ENCODE measurements at regions of chr1 and their contacts with region 1.

Region 1: DNA sequence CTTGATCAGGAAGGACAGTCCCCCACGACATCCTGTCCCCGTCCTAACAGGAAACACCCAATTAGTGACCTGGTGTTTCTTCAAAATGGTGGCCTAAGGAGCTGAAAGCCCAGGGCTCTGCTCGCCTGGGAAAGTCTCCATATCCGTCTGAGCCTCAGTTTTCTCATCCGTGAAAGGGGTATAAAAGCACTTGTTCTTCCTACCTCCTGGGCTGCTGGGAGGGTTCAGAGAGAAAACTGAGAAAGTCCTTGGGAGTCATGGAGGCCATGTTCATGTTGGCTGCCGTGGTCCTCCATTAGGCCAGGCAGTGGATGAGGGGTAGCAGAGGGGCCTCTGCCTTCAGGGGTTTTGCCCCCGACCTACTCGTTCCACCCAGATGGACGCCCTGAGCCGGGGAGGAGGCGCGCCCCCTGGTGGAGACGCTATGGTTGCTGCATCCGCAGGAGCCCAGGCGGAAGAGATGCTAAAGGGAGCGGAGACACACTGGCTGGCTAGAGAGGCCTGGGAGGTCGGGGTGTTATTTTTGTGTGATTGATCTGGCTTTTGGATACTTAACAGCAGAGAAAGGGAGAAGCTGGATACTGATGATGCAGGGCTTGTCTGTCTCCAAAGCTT is 113.5 kb downstream of the PRDM2 start:
- DNase-seq: no peak
- H3K4me3 ChIP-seq: no peak overlapping the region
- H3K27ac ChIP-seq: no peak overlapping the region
- H3K4me1 ChIP-seq: no peaks in the 10 kb centered on the region
- H3K27me3 ChIP-seq: no peaks in the 10 kb centered on the region
- CTCF ChIP-seq: peak in 2 of 4 experiments; percentile 40 to 63
- EP300 ChIP-seq: no peak
- POLR2A ChIP-seq: no peak

Region 2: DNA sequence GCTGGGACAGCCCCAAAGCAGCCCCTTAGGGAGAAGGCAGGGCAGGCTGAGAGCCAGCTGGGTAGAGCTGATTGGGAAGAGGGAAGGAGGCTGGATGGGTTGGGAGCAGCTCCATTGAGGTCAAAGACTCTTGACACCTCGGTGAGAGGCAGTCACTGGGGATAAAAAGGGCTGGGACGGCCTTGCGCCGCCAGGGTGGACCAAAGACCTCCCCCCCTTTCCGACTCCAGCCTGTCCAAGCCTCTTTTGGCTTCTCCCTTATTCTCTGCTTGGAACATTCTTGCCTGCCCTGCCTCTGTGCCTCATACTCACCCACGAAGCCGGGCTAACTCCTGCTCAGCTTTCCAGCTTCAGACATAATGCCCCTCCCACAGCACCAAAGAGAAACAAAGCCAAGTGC is 350.8 kb before region 1 on chr1:
- intact Hi-C with region 1: no loop called
- DNase-seq: no peak
- H3K4me3 ChIP-seq: no peak overlapping the region
- H3K27ac ChIP-seq: no peak overlapping the region
- H3K4me1 ChIP-seq: no peaks in the 10 kb centered on the region
- H3K27me3 ChIP-seq: peaks cover 0 to 7% (median 0%) of the 10 kb centered on the region in 3 donors
- CTCF ChIP-seq: no peak
- EP300 ChIP-seq: no peak
- POLR2A ChIP-seq: no peak

Region 3: GRCh38 chr1:13667691-13668090 is 145.8 kb before region 1 on chr1:
- intact Hi-C with region 1: loop called (anchors 5 kb)
- DNase-seq: no peak
- H3K4me3 ChIP-seq: no peak overlapping the region
- H3K27ac ChIP-seq: no peak overlapping the region
- H3K4me1 ChIP-seq: peaks cover 0 to 6% (median 4%) of the 10 kb centered on the region in 4 donors
- H3K27me3 ChIP-seq: no peaks in the 10 kb centered on the region
- CTCF ChIP-seq: no peak
- EP300 ChIP-seq: no peak
- POLR2A ChIP-seq: no peak

Region 4: GRCh38 chr1:13748610-13749505 is 64.6 kb before region 1 on chr1:
- intact Hi-C with region 1: loop called (anchors 2 kb)
- DNase-seq: peak; percentile 99
- H3K4me3 ChIP-seq: peak overlapping the region; percentile 64 to 94 (median 74)
- H3K27ac ChIP-seq: peak overlapping the region; percentile 93 to 96 (median 94)
- H3K4me1 ChIP-seq: peaks cover 0 to 38% (median 34%) of the 10 kb centered on the region in 4 donors
- H3K27me3 ChIP-seq: no peaks in the 10 kb centered on the region
- CTCF ChIP-seq: no peak
- EP300 ChIP-seq: no peak
- POLR2A ChIP-seq: peak; percentile 51 to 53

Region 5: GRCh38 chr1:14027099-14027498 is 213.6 kb after region 1 on chr1:
- intact Hi-C with region 1: no loop called
- DNase-seq: no peak
- H3K4me3 ChIP-seq: no peak overlapping the region
- H3K27ac ChIP-seq: no peak overlapping the region
- H3K4me1 ChIP-seq: no peaks in the 10 kb centered on the region
- H3K27me3 ChIP-seq: no peaks in the 10 kb centered on the region
- CTCF ChIP-seq: no peak
- EP300 ChIP-seq: no peak
- POLR2A ChIP-seq: no peak

Measured in sigmoid colon (tissue), 7 donors.